MCF 10A (cell line): ENCODE measurements at regions of chr10 and their contacts with region 1.

Region 1: GRCh38 chr10:60480865-60481563 is 91.3 kb upstream of the ANK3 start:
- DNase-seq: peak; percentile 97
- H3K4me3 Mint-ChIP-seq: no peak overlapping the region
- H3K27ac Mint-ChIP-seq: peak overlapping the region; percentile 79
- H3K4me1 Mint-ChIP-seq: peaks cover 27% of the 10 kb centered on the region
- H3K27me3 Mint-ChIP-seq: no peaks in the 10 kb centered on the region
- CTCF ChIP-seq: no peak

Region 2: GRCh38 chr10:60314069-60314940 is 166.7 kb before region 1 on chr10:
- CTCF ChIA-PET with region 1: no interaction called
- POLR2A ChIA-PET with region 1: no interaction called
- intact Hi-C with region 1: no loop called
- DNase-seq: peak; percentile 75
- H3K4me3 Mint-ChIP-seq: no peak overlapping the region
- H3K27ac Mint-ChIP-seq: peak overlapping the region; percentile 61
- H3K4me1 Mint-ChIP-seq: peaks cover 25% of the 10 kb centered on the region
- H3K27me3 Mint-ChIP-seq: no peaks in the 10 kb centered on the region
- CTCF ChIP-seq: no peak

Region 3: DNA sequence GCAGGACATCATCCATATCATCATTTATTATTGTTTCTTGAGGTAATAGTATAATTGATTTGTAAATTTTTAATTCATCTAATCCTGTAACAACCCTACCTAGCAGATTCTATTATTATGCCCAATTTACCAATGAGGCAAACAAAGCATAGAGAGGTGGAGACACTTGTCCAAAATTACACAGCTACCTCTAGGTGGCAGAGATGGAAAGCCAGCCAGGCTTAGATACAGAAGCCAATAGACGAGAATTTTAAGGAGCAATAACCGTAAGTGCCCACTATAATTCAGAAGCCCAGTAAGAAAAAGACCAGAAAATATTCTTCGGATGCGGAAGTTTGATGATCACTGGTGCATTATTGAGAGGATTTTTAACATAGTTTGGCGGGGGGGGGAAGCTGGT is 145.3 kb before region 1 on chr10:
- CTCF ChIA-PET with region 1: no interaction called
- POLR2A ChIA-PET with region 1: no interaction called
- intact Hi-C with region 1: no loop called
- DNase-seq: peak; percentile 47
- H3K4me3 Mint-ChIP-seq: no peak overlapping the region
- H3K27ac Mint-ChIP-seq: peak overlapping the region; percentile 10
- H3K4me1 Mint-ChIP-seq: no peaks in the 10 kb centered on the region
- H3K27me3 Mint-ChIP-seq: no peaks in the 10 kb centered on the region
- CTCF ChIP-seq: peak; percentile 36

Region 4: DNA sequence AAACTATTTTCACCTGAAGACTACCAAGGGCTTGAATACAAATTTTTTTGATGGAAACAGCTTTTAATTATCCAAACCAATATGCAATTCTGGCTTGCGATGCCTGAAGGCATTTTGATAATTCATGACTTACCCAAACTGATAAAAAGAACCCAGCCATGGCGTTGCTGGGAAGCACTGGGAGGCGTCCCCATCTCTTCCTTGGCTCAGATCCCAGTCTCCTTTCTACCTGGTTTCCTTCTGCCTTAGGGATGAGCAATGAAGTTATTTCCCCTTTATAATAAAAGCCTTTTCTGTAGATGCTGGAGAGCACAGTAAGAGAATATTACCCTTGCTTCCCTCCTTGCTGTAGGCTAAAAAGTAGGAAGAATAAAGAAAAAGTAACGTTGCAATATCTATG is 37.7 kb after region 1 on chr10:
- CTCF ChIA-PET with region 1: interaction called, 3 read pairs
- POLR2A ChIA-PET with region 1: interaction called, 11 read pairs
- intact Hi-C with region 1: no loop called
- DNase-seq: peak; percentile 34
- H3K4me3 Mint-ChIP-seq: no peak overlapping the region
- H3K27ac Mint-ChIP-seq: no peak overlapping the region
- H3K4me1 Mint-ChIP-seq: no peaks in the 10 kb centered on the region
- H3K27me3 Mint-ChIP-seq: no peaks in the 10 kb centered on the region
- CTCF ChIP-seq: no peak

Region 5: GRCh38 chr10:61153771-61154170 is 672.8 kb after region 1 on chr10:
- CTCF ChIA-PET with region 1: no interaction called
- POLR2A ChIA-PET with region 1: no interaction called
- intact Hi-C with region 1: no loop called
- DNase-seq: no peak
- H3K4me3 Mint-ChIP-seq: no peak overlapping the region
- H3K27ac Mint-ChIP-seq: no peak overlapping the region
- H3K4me1 Mint-ChIP-seq: no peaks in the 10 kb centered on the region
- H3K27me3 Mint-ChIP-seq: no peaks in the 10 kb centered on the region
- CTCF ChIP-seq: no peak